Caco-2 (cell line): ENCODE measurements at regions of chr1 and their contacts with region 1.

Region 1: GRCh38 chr1:230568008-230568407 is 74.3 kb upstream of the COG2 start:
- DNase-seq: peak; percentile 38 to 65
- H3K4me3 ChIP-seq: no peak overlapping the region
- H3K4me3 Mint-ChIP-seq: no peak overlapping the region
- H3K27ac Mint-ChIP-seq: peak overlapping the region; percentile 32
- H3K4me1 ChIP-seq: peaks cover 35% of the 10 kb centered on the region
- H3K4me1 Mint-ChIP-seq: peaks cover 16% of the 10 kb centered on the region
- H3K27me3 ChIP-seq: no peaks in the 10 kb centered on the region
- H3K27me3 Mint-ChIP-seq: no peaks in the 10 kb centered on the region
- CTCF ChIP-seq: peak; percentile 53 to 57

Region 2: GRCh38 chr1:230426246-230427093 is 141.5 kb before region 1 on chr1 and contains the start of gene PGBD5:
- CTCF ChIA-PET with region 1: no interaction called
- POLR2A ChIA-PET with region 1: no interaction called
- intact Hi-C with region 1: loop called (anchors 10 kb)
- DNase-seq: peak; percentile 82 to 92
- H3K4me3 ChIP-seq: peak within 1 kb of the TSS; percentile 55
- H3K4me3 Mint-ChIP-seq: peak within 1 kb of the TSS; percentile 73
- H3K27ac Mint-ChIP-seq: no peak within 1 kb of the TSS
- H3K4me1 ChIP-seq: peaks cover 6% of the 10 kb centered on the region; the same call in 1 of the 2 replicates
- H3K4me1 Mint-ChIP-seq: no peaks in the 10 kb centered on the region
- H3K27me3 ChIP-seq: peaks cover 4% of the 10 kb centered on the region; the same call in 1 of the 2 replicates
- H3K27me3 Mint-ChIP-seq: peaks cover 19% of the 10 kb centered on the region
- CTCF ChIP-seq: no peak
- total RNA-seq, gene PGBD5: 2.4 and 3.7 TPM in 2 replicates

Region 3: GRCh38 chr1:230581446-230582079 is 13.6 kb after region 1 on chr1:
- CTCF ChIA-PET with region 1: interaction called, 10 read pairs
- POLR2A ChIA-PET with region 1: no interaction called
- intact Hi-C with region 1: loop called (anchors 1 kb)
- DNase-seq: peak; percentile 34 to 38
- H3K4me3 ChIP-seq: no peak overlapping the region
- H3K4me3 Mint-ChIP-seq: no peak overlapping the region
- H3K27ac Mint-ChIP-seq: no peak overlapping the region
- H3K4me1 ChIP-seq: no peaks in the 10 kb centered on the region
- H3K4me1 Mint-ChIP-seq: peaks cover 1% of the 10 kb centered on the region
- H3K27me3 ChIP-seq: no peaks in the 10 kb centered on the region; the same call in 1 of the 2 replicates
- H3K27me3 Mint-ChIP-seq: peaks cover 2% of the 10 kb centered on the region
- CTCF ChIP-seq: peak; percentile 45 to 60

Region 4: DNA sequence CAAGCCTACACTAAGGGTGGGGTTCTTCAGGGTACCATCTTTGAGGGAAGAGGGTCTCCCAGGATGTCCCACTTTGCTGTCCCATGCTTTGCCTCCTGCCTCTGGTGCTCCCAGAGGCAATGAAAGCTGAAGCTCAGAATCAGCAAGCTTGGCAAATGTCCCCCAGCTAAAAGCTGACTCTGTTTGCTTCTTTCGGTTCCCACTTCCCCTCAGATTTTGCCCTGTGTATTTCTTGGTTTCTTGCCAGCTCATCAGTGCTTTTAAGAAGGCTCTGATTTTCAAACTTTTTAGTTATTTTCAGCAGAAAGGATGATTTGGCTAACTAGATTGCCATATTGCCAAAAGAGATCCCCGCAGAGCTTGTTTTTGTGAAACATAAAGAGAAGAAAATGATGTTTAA is 41.2 kb after region 1 on chr1:
- CTCF ChIA-PET with region 1: no interaction called
- POLR2A ChIA-PET with region 1: no interaction called
- intact Hi-C with region 1: loop called (anchors 1 kb)
- DNase-seq: no peak
- H3K4me3 ChIP-seq: no peak overlapping the region
- H3K4me3 Mint-ChIP-seq: no peak overlapping the region
- H3K27ac Mint-ChIP-seq: no peak overlapping the region
- H3K4me1 ChIP-seq: no peaks in the 10 kb centered on the region
- H3K4me1 Mint-ChIP-seq: no peaks in the 10 kb centered on the region
- H3K27me3 ChIP-seq: no peaks in the 10 kb centered on the region
- H3K27me3 Mint-ChIP-seq: no peaks in the 10 kb centered on the region
- CTCF ChIP-seq: no peak